ENCODE measurements at regions of chr3 and their contacts with region 1.

Region 1: DNA sequence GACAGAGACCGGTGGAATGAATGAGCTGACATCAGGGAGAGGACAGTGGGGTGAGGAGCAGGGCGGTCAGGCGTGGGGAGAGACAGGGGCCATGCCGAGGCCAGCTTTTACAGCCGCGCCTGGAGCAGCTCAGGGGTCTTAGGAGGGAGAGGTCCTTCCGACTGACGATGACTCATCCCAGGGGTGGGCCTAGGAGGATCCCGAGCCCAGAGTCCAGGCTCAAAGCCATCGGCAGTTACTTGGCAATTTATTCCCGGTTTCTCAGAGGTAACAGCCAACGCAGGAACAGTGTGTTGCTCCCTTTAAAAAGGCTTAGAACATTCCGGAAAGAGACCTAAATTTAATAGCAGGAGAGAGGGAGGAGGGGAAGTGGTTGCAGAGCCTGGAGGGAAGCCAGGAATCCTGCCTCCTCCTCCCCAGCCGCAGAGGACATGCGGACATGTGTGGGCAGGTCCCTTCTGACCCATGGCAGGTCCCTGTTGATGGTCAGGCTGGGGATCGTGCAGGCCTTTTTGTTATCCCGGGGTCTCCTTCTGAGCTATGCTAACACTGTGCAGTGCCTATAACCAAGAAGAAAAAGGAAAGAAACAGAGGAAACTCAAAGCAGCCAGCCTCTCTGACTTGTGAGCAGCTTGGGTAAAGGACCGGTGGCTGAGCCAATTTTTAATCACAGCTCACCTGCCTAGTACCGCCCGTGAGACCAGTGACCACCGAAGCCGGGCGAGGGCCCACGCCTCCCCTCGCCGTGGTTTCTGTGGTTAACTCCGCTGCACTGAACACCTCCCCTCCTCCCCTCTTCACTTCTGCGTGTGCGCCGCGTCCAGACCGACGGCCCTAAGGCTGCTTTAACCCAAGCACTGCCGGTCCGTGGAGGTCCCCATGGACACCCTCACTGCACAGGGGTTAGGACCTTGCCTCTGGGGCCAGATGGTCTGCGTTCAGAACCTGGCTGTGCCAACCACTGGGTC is 392.4 kb upstream of the PROK2 start:
- DNase-seq: no peak
- H3K4me3 Mint-ChIP-seq: no peak overlapping the region
- H3K27ac Mint-ChIP-seq: no peak overlapping the region
- H3K4me1 Mint-ChIP-seq: peaks cover 6% of the 10 kb centered on the region
- H3K27me3 Mint-ChIP-seq: peaks cover 69% of the 10 kb centered on the region

Region 2: DNA sequence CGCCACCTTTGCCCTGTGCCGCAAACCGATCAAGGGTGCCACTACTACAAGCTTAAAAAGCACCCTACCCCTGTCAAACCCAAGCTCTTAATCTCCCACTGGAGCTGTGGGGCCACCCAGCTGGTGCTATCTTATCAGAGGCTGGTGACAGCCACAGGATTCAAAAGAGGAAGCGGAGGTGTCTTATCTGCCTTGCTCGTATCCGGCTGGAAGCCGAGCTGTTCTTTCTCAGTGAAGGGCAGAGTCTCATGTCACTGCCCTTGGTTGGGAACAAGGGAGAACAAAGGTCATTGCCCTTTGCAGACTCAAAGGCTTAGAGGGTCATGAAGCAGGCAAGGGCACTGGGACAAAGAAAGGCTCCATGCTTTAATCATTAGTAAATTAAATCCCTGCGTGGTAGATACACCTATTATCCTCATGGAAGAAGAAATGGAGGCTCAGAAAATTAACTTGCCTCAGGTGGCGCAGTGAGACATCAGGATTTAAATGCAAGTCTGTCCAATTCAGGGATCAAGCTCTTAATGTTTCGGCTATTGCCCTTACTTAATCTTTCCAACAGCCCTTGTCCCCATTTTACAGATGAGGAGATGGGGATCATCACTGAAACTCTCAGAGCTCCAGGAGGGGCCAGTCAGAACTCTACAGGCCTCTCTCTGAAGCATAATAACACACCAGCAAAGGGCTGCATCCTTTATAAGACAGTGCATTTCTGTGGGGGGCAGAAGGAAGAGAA is 32.4 kb before region 1 on chr3:
- intact Hi-C with region 1: loop called (anchors 5 kb)
- DNase-seq: peak; percentile 14
- H3K4me3 Mint-ChIP-seq: no peak overlapping the region
- H3K27ac Mint-ChIP-seq: no peak overlapping the region
- H3K4me1 Mint-ChIP-seq: peaks cover 17% of the 10 kb centered on the region
- H3K27me3 Mint-ChIP-seq: no peaks in the 10 kb centered on the region